Activated CD4-positive, alpha-beta memory T cell treated with anti-CD3 and anti-CD28 coated beads for 36 hours (primary cell): ENCODE measurements at regions of chr6 and their contacts with region 1.

Region 1: GRCh38 chr6:148166339-148166968 is 176.2 kb upstream of the SASH1 start:
- DNase-seq: no peak
- H3K4me3 Mint-ChIP-seq: no peak overlapping the region
- H3K27ac Mint-ChIP-seq: no peak overlapping the region
- H3K4me1 Mint-ChIP-seq: peaks cover 5% of the 10 kb centered on the region
- H3K27me3 Mint-ChIP-seq: peaks cover 6% of the 10 kb centered on the region

Region 2: DNA sequence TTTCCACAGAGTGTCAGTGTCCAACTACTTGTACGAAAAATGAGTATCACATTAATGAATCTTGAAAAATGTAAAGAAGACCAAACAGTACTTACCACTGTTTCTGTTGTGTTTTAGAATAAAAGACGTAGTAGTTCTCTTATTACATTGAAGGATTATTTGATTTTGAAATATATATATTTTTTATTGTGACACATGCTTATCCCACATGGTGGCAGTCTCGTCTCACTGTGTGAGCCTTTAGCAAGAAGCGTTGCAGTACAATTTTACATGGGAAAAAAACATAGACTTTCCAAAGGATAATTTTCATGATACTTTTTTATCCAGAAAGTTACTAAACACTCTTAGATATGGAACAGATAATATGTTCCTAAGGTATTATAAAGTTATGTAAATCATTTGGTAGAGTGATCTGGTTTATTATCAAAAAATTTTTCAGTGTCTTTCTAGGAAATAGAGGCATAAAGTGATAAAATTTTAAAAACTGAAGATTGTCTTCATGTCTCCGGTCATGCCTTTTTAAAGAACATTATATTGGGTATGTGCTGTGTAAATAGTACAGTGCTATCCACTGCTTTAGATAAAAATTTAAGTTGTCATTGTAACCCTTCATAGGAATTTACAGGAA is 775.4 kb before region 1 on chr6:
- CTCF ChIA-PET with region 1: no interaction called
- POLR2A ChIA-PET with region 1: no interaction called
- intact Hi-C with region 1: loop called (anchors 5 kb)
- DNase-seq: no peak
- H3K4me3 Mint-ChIP-seq: no peak overlapping the region
- H3K27ac Mint-ChIP-seq: no peak overlapping the region
- H3K4me1 Mint-ChIP-seq: peaks cover 6% of the 10 kb centered on the region
- H3K27me3 Mint-ChIP-seq: no peaks in the 10 kb centered on the region

Region 3: DNA sequence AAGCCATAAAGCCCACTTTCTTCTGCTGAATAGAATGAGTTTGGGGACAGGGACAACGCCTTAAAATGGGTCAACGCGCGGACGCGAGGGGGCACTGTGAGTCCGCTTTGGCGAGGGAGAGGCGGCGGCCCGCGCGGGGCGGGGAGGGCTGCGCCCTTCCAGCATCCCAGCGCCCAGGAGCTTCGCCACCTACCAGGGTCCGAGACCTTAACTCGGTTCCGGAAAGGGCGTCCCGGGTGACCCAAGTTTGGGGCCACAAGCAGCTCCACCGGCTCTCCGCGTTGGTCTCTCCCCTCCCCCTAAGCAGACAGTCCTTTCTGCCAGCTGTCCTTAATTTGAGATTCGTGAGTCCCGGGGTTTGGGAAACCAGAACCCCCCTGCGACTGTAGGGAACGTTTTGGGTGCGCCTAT is 659.7 kb before region 1 on chr6:
- CTCF ChIA-PET with region 1: interaction called, 24 read pairs
- POLR2A ChIA-PET with region 1: no interaction called
- intact Hi-C with region 1: loop called (anchors 1 kb)
- DNase-seq: peak; percentile 71
- H3K4me3 Mint-ChIP-seq: no peak overlapping the region
- H3K27ac Mint-ChIP-seq: no peak overlapping the region
- H3K4me1 Mint-ChIP-seq: peaks cover 17% of the 10 kb centered on the region
- H3K27me3 Mint-ChIP-seq: peaks cover 55% of the 10 kb centered on the region

Region 4: GRCh38 chr6:148154668-148155067 is 11.8 kb before region 1 on chr6:
- CTCF ChIA-PET with region 1: interaction called, 13 read pairs
- POLR2A ChIA-PET with region 1: no interaction called
- intact Hi-C with region 1: no loop called
- DNase-seq: no peak
- H3K4me3 Mint-ChIP-seq: no peak overlapping the region
- H3K27ac Mint-ChIP-seq: no peak overlapping the region
- H3K4me1 Mint-ChIP-seq: no peaks in the 10 kb centered on the region
- H3K27me3 Mint-ChIP-seq: no peaks in the 10 kb centered on the region

Region 5: GRCh38 chr6:148177589-148178233 is 11.3 kb after region 1 on chr6:
- CTCF ChIA-PET with region 1: interaction called, 11 read pairs
- POLR2A ChIA-PET with region 1: no interaction called
- intact Hi-C with region 1: no loop called
- DNase-seq: peak; percentile 35
- H3K4me3 Mint-ChIP-seq: no peak overlapping the region
- H3K27ac Mint-ChIP-seq: no peak overlapping the region
- H3K4me1 Mint-ChIP-seq: no peaks in the 10 kb centered on the region
- H3K27me3 Mint-ChIP-seq: peaks cover 17% of the 10 kb centered on the region

Region 6: GRCh38 chr6:148509800-148510581 is 343.5 kb after region 1 on chr6:
- CTCF ChIA-PET with region 1: no interaction called
- POLR2A ChIA-PET with region 1: no interaction called
- intact Hi-C with region 1: no loop called
- DNase-seq: no peak
- H3K4me3 Mint-ChIP-seq: no peak overlapping the region
- H3K27ac Mint-ChIP-seq: no peak overlapping the region
- H3K4me1 Mint-ChIP-seq: peaks cover 1% of the 10 kb centered on the region
- H3K27me3 Mint-ChIP-seq: peaks cover 34% of the 10 kb centered on the region